CD14-positive monocyte (primary cell): ENCODE measurements at regions of chr6 and their contacts with region 1.

Region 1: GRCh38 chr6:139764498-139764986 is 390.1 kb upstream of the CITED2 start:
- DNase-seq: peak; percentile 67 to 83 (median 80)
- H3K4me3 ChIP-seq: peak overlapping the region in 1 of 3 experiments; percentile 45
- H3K4me3 Mint-ChIP-seq: peak overlapping the region; percentile 66 to 86
- H3K27ac ChIP-seq: peak overlapping the region; percentile 64 to 93
- H3K27ac Mint-ChIP-seq: peak overlapping the region; percentile 84 to 98 (median 96)
- H3K4me1 ChIP-seq: peaks cover 35 to 42% of the 10 kb centered on the region in 2 donors
- H3K4me1 Mint-ChIP-seq: peaks cover 36% of the 10 kb centered on the region
- H3K27me3 ChIP-seq: no peaks in the 10 kb centered on the region
- H3K27me3 Mint-ChIP-seq: no peaks in the 10 kb centered on the region
- CTCF ChIP-seq: no peak

Region 2: DNA sequence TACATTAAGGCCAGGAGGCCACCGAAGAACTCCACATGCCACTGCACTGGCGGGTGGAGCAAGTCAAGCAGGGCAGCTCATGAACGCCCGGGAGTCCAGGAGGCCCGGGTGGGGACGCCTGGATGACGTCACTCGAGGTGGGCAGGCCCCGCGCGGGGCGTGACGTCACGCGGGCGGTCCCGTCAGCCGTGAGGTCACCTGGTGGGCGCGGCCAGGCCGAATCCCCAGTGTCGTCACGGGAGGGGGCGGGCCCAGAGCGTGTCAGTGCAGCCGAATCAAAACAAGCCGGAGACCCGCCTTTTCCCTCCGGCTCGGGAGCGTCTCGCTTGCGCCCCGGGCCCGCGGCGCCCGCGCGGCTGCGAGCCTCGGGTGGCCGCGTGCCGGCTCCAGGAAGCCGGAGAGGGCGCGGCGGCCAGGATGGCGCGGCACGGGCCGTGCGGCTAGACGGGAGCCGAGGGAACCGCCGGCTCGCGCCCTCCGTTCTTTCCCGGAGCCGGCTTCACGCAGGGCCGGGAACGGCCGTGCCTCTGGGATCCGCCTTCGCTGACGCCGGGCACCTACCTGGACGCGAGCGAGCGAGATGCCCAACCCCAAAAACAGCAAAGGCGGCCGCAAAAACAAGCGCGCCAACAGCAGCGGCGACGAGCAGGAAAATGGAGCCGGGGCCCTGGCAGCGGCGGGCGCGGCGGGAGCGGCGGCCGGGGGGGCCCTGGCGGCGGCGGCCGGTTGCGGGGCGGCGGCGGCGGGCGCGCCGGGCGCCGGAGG is 629.5 kb before region 1 on chr6 and contains the start of gene HECA:
- intact Hi-C with region 1: loop called in 1 of 2 experiments (anchors 10 kb)
- DNase-seq: peak; percentile 93 to 98 (median 97)
- H3K4me3 ChIP-seq: peak within 1 kb of the TSS; percentile 77 to 94 (median 86)
- H3K4me3 Mint-ChIP-seq: peak within 1 kb of the TSS; percentile 93 to 96
- H3K27ac ChIP-seq: peak within 1 kb of the TSS; percentile 96
- H3K27ac Mint-ChIP-seq: peak within 1 kb of the TSS; percentile 97 to 99 (median 98)
- H3K4me1 ChIP-seq: peaks cover 51 to 70% of the 10 kb centered on the region in 2 donors
- H3K4me1 Mint-ChIP-seq: peaks cover 64% of the 10 kb centered on the region
- H3K27me3 ChIP-seq: no peaks in the 10 kb centered on the region
- H3K27me3 Mint-ChIP-seq: peaks cover 0 to 6% (median 0%) of the 10 kb centered on the region in 3 donors
- CTCF ChIP-seq: no peak
- polyA plus RNA-seq, gene HECA: 2.1 to 28.7 (median 3.3) TPM

Region 3: DNA sequence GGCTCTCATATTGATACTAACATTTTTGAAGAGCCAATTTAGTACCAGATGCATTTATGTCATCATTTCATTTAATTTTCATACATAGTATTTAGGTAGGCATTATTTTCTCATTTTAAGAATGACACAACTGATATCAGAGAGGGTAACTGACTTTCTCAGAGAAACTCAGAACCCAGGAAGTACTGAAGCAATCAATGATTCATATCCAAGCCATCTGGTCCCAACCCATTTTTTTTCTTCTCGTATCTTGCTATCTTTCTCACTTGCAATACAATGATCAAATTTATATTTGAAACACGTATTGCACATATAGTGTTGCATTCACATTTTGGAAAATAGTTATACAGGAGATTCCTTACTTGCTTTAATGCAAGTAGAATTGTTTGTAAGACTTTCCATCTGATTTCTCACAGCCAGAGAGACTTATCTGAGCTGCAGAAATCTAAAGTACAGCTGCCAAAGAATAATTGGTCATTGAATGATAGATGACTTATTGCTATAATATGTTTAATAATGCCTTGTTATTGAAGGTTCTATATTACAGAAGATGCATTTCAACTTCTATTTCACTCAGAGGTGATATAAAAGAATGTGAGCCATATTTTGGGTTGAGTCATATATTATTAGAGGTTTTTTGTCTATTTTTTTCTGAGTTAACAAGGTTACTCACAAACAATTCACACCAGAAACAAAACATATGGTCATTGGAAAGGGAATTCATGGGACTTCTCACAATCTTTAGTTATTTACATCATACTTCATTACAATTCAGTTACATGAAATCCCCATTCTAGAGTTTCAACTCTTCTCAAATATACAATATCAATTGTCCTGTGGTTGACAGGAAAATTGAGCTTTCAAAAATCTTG is 52.6 kb before region 1 on chr6:
- intact Hi-C with region 1: loop called (anchors 10 kb)
- DNase-seq: peak in 2 of 3 donors; percentile 52 to 58
- H3K4me3 ChIP-seq: no peak overlapping the region
- H3K4me3 Mint-ChIP-seq: no peak overlapping the region
- H3K27ac ChIP-seq: peak overlapping the region in 1 of 2 donors; percentile 42
- H3K27ac Mint-ChIP-seq: peak overlapping the region in 5 of 7 donors; percentile 21 to 80 (median 73)
- H3K4me1 ChIP-seq: peaks cover 20 to 36% of the 10 kb centered on the region in 2 donors
- H3K4me1 Mint-ChIP-seq: peaks cover 36% of the 10 kb centered on the region
- H3K27me3 ChIP-seq: no peaks in the 10 kb centered on the region
- H3K27me3 Mint-ChIP-seq: peaks cover 0 to 3% (median 3%) of the 10 kb centered on the region in 3 donors
- CTCF ChIP-seq: no peak

Region 4: DNA sequence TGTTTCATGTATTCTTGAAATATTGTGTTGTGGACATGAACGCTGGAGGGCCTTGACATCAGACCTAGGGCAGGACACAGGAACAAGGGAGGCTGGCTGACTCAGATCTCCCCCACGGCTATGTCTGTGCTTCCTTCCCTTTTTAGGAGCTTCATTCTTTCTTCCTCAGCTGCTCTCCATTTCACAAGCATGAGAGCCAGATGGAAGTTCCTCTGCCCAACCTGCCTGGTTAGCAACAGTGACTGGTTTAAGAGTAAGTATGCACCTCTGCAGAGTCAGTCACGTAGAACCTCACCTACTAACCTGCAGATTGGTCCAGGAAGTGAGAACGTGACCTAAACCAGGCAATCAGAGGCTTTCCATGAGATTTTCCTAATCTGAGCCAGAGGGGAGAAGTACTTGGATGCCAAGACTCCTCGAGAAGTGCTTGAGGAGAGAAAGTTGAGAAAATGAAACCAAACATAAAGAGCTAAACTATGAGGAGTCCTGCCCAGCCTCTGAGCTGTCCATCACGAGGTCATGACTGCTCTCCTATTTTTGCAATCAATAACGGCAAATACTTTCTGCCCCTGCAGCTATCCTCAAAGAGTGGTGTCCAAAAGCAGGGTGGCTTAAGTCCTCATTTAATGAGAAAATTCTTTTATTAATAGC is 75.1 kb after region 1 on chr6:
- intact Hi-C with region 1: loop called (anchors 5 to 10 kb)
- DNase-seq: peak; percentile 94 to 98 (median 97)
- H3K4me3 ChIP-seq: peak overlapping the region; percentile 58 to 97 (median 75)
- H3K4me3 Mint-ChIP-seq: peak overlapping the region; percentile 77 to 90
- H3K27ac ChIP-seq: peak overlapping the region; percentile 85 to 97
- H3K27ac Mint-ChIP-seq: peak overlapping the region; percentile 96 to 99 (median 98)
- H3K4me1 ChIP-seq: peaks cover 37 to 41% of the 10 kb centered on the region in 2 donors
- H3K4me1 Mint-ChIP-seq: peaks cover 34% of the 10 kb centered on the region
- H3K27me3 ChIP-seq: no peaks in the 10 kb centered on the region
- H3K27me3 Mint-ChIP-seq: peaks cover 0 to 2% (median 0%) of the 10 kb centered on the region in 3 donors
- CTCF ChIP-seq: no peak

Region 5: GRCh38 chr6:139846538-139847456 is 82.3 kb after region 1 on chr6:
- intact Hi-C with region 1: loop called in 1 of 2 experiments (anchors 10 kb)
- DNase-seq: peak; percentile 36 to 43 (median 42)
- H3K4me3 ChIP-seq: peak overlapping the region in 2 of 3 experiments; percentile 19 to 60
- H3K4me3 Mint-ChIP-seq: peak overlapping the region; percentile 25 to 87
- H3K27ac ChIP-seq: peak overlapping the region; percentile 36 to 82
- H3K27ac Mint-ChIP-seq: peak overlapping the region; percentile 88 to 95 (median 93)
- H3K4me1 ChIP-seq: peaks cover 28 to 40% of the 10 kb centered on the region in 2 donors
- H3K4me1 Mint-ChIP-seq: peaks cover 38% of the 10 kb centered on the region
- H3K27me3 ChIP-seq: no peaks in the 10 kb centered on the region
- H3K27me3 Mint-ChIP-seq: no peaks in the 10 kb centered on the region
- CTCF ChIP-seq: no peak

Region 6: GRCh38 chr6:140043336-140043735 is 278.8 kb after region 1 on chr6:
- intact Hi-C with region 1: loop called in 1 of 2 experiments (anchors 5 kb)
- DNase-seq: peak; percentile 74 to 91 (median 82)
- H3K4me3 ChIP-seq: no peak overlapping the region
- H3K4me3 Mint-ChIP-seq: no peak overlapping the region
- H3K27ac ChIP-seq: peak overlapping the region in 1 of 2 donors; percentile 63
- H3K27ac Mint-ChIP-seq: peak overlapping the region in 6 of 7 donors; percentile 37 to 88 (median 76)
- H3K4me1 ChIP-seq: peaks cover 51 to 72% of the 10 kb centered on the region in 2 donors
- H3K4me1 Mint-ChIP-seq: peaks cover 59% of the 10 kb centered on the region
- H3K27me3 ChIP-seq: no peaks in the 10 kb centered on the region
- H3K27me3 Mint-ChIP-seq: no peaks in the 10 kb centered on the region
- CTCF ChIP-seq: no peak